ENCODE measurements at regions of chr17 and their contacts with region 1.

Region 1: DNA sequence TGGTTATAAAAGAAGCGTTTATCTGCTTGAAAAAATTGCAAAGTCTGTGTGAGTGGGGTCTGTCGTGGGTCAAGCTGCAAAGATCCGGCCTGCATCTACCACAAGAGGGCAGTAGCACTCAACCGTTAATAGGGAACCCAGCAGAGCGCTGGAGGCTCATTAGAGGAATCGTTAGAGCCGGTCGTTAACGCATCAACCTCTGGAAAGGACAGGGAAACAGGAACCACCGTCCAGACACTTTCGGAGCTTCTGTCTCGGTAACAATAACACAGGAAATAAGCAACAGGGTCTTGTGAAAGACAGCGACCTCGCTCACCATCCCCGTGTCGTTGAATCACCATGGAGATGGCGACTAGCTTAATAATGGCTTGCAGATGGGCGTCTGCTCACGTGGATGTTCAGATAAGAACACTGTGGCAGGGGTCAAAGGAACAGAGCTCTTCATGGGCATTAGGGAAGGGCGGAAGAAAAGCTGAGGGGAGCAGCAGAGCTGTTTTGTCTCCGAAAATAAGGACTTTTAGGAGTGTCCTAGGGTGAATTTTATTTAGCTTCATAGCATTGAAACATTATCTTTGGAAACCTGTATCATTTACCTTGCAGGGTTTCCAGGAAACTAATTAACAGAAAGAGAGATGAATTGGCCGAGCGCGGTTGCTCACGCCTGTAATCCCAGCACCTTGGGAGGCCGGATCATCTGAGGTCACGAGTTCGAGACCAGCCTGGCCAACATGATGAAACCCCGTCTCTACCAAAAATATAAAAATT is 11.9 kb upstream of the NSRP1 start:
- DNase-seq: peak; percentile 84 to 88
- H3K4me3 ChIP-seq: peak overlapping the region; percentile 24
- H3K4me1 ChIP-seq: no peaks in the 10 kb centered on the region; the same call in 1 of the 2 replicates
- H3K27me3 ChIP-seq: no peaks in the 10 kb centered on the region

Region 2: GRCh38 chr17:29807520-29808351 is 297.0 kb before region 1 on chr17:
- in situ Hi-C with region 1: loop called (anchors 10 kb)
- DNase-seq: peak; percentile 69 to 83
- H3K4me3 ChIP-seq: no peak overlapping the region
- H3K4me1 ChIP-seq: no peaks in the 10 kb centered on the region
- H3K27me3 ChIP-seq: no peaks in the 10 kb centered on the region

Region 3: GRCh38 chr17:30336369-30337171 is 231.8 kb after region 1 on chr17:
- in situ Hi-C with region 1: loop called (anchors 10 kb)
- DNase-seq: peak; percentile 79 to 80
- H3K4me3 ChIP-seq: no peak overlapping the region
- H3K4me1 ChIP-seq: peaks cover 3% of the 10 kb centered on the region
- H3K27me3 ChIP-seq: no peaks in the 10 kb centered on the region; the same call in 1 of the 2 replicates